ENCODE measurements at regions of chr19 and their contacts with region 1.

Region 1: DNA sequence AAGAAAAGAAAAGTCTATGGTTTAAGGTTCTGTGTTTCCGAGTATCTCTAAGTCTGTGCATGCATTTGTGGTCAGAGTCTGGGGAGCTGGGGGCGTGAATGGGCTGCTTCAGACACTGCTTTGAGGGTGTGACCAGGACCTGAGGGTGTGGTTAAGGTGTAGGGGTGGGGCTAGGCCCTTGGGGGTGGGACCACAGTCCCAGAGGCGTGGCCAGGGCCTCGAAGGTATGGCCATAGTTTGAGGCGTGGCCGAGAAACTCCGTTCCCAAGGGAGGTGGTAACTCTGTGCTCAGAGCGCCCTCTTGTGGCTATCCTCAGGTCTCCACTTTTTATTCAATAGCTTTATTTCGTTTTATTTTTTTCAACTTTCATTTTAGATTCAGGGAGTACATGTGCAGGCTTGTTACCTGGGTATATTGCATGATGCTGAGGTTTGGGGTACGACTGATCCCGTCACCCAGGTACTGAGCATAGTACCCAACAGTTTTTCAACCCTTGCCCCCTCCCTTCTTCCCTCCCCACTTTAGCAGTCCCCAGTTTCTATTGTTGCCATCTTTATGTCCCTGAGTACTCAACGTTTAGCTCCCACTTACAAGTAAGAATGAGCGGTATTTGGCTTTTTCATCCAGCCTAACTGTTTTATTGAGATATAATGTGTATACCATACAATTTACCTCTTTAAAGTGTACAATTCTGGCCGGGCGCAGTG is 7.0 kb upstream of the CBLC start:
- DNase-seq: peak; percentile 99
- ATAC-seq: peak; percentile 100
- H3K4me3 Mint-ChIP-seq: peak overlapping the region; percentile 47
- H3K27ac Mint-ChIP-seq: peak overlapping the region; percentile 77
- H3K4me1 Mint-ChIP-seq: peaks cover 30% of the 10 kb centered on the region
- H3K27me3 Mint-ChIP-seq: no peaks in the 10 kb centered on the region

Region 2: GRCh38 chr19:44587963-44588770 is 182.5 kb before region 1 on chr19:
- CTCF ChIA-PET with region 1: no interaction called
- POLR2A ChIA-PET with region 1: no interaction called
- intact Hi-C with region 1: loop called in 1 of 2 experiments (anchors 5 kb)
- DNase-seq: peak; percentile 71
- ATAC-seq: peak; percentile 87
- H3K4me3 Mint-ChIP-seq: no peak overlapping the region
- H3K27ac Mint-ChIP-seq: peak overlapping the region; percentile 84
- H3K4me1 Mint-ChIP-seq: peaks cover 20% of the 10 kb centered on the region
- H3K27me3 Mint-ChIP-seq: peaks cover 6% of the 10 kb centered on the region

Region 3: DNA sequence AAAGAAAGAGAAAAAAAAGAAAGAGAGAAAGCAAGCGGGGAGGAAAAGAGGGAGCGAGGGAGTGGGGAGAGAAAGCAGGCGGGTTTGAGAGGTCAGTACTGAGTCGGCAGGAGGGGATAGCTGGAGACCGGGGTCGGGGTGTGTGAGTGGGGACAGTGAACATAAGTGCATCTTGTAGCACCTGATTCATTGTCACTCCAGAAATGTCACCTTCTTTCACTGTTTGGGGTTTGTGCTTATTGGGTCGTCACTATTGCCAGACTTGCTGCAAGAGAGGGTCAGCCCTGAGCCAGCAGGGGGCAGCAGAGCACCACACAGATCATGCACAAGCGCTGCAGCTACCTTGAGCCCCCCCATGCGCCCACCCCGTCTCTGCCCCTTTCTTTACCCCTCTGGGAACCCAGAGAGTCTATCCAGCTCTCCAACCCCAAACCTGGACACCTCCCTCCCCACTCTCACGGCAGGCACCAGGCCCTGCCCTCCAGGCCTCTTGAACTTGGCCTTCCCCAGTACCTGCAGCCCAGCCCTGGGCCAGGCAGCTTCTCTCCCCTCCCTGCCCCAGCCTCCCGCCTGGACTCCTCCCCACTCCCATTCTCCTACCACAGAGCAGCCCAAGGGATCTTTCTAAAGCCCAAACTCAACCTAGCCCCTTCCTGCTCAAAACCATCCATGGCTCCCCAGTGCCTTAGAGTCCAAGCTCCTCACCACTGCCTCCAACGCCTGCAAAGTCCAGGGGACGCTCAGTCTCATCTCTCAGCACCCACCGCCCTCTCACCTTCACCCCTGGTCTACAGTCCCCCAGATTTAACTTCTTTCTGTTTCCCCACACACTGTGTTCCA is 81.4 kb before region 1 on chr19:
- CTCF ChIA-PET with region 1: interaction called, 66 read pairs
- POLR2A ChIA-PET with region 1: interaction called, 5 read pairs
- intact Hi-C with region 1: loop called (anchors 1 kb)
- DNase-seq: peak; percentile 90
- ATAC-seq: peak; percentile 39
- H3K4me3 Mint-ChIP-seq: no peak overlapping the region
- H3K27ac Mint-ChIP-seq: no peak overlapping the region
- H3K4me1 Mint-ChIP-seq: peaks cover 42% of the 10 kb centered on the region
- H3K27me3 Mint-ChIP-seq: peaks cover 17% of the 10 kb centered on the region

Region 4: GRCh38 chr19:44737238-44738071 is 33.2 kb before region 1 on chr19:
- CTCF ChIA-PET with region 1: interaction called, 19 read pairs
- POLR2A ChIA-PET with region 1: no interaction called
- intact Hi-C with region 1: no loop called
- DNase-seq: no peak
- ATAC-seq: peak; percentile 37
- H3K4me3 Mint-ChIP-seq: no peak overlapping the region
- H3K27ac Mint-ChIP-seq: no peak overlapping the region
- H3K4me1 Mint-ChIP-seq: no peaks in the 10 kb centered on the region
- H3K27me3 Mint-ChIP-seq: no peaks in the 10 kb centered on the region

Region 5: GRCh38 chr19:44752816-44753618 is 17.7 kb before region 1 on chr19:
- CTCF ChIA-PET with region 1: interaction called, 10 read pairs
- POLR2A ChIA-PET with region 1: interaction called, 5 read pairs
- intact Hi-C with region 1: loop called (anchors 1 kb)
- DNase-seq: peak; percentile 98
- ATAC-seq: peak; percentile 79
- H3K4me3 Mint-ChIP-seq: peak overlapping the region; percentile 94
- H3K27ac Mint-ChIP-seq: peak overlapping the region; percentile 97
- H3K4me1 Mint-ChIP-seq: peaks cover 54% of the 10 kb centered on the region
- H3K27me3 Mint-ChIP-seq: no peaks in the 10 kb centered on the region

Measured in activated CD4-positive, alpha-beta T cell treated with anti-CD3 and anti-CD28 coated beads for 36 hours (primary cell).